WTC11 (cell line): ENCODE measurements at regions of chr10 and their contacts with region 1.

Region 1: DNA sequence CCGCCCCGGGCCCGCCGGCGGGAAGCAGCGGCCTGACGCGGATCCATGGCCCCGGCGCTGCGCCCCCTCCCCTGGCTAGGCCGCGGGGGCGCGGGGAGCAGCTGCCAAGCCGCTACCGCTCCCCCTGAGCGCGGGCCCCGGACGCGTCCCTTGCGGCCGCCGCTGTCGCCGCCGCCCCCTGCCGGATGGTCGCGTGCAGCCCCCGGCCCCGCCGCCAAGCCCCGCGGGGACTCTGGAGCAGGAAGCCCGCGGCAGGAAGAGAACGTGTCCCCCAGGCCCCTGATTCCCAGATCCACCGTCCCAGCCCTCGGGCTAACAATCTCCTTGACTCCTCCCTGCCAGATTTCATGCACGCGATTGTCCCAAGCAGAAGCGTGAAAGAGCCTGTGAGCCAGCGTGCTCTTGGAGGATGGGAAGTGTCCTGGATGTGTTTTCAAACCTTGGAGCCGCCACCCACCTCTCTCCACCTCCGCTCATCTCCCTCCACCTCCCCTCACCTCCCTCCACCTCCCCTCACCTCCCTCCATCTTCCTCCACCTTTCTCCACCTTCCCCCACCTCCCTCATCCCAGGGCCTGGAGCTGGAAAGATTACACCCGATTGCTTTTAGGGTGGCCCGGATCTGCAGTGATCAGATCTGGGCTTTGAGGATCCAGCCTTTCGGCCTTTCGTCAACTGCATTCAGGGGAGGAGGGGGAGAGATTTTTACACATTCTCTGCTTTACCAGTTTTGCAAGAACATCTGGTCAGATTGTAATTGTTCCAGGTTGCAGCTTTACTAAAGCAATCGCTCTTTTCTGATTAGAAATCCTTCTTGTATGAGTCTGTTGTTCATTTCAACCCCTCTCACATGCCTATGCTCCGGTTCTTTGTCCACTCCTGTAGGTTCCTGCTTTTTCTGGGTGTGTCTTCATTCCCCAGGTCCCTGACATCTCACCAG is 570 bp upstream of the PRTFDC1 start:
- DNase-seq: no peak
- ATAC-seq: peak; percentile 43
- H3K4me3 Mint-ChIP-seq: peak overlapping the region; percentile 75
- H3K27ac Mint-ChIP-seq: peak overlapping the region; percentile 84
- H3K4me1 Mint-ChIP-seq: peaks cover 35% of the 10 kb centered on the region
- H3K27me3 Mint-ChIP-seq: no peaks in the 10 kb centered on the region
- CTCF ChIP-seq: no peak

Region 2: GRCh38 chr10:24415455-24416125 is 537.4 kb before region 1 on chr10:
- CTCF ChIA-PET with region 1: no interaction called
- POLR2A ChIA-PET with region 1: no interaction called
- DNase-seq: peak; percentile 12
- ATAC-seq: peak; percentile 48; the same call in 1 of the 2 replicates
- H3K4me3 Mint-ChIP-seq: no peak overlapping the region
- H3K27ac Mint-ChIP-seq: no peak overlapping the region
- H3K4me1 Mint-ChIP-seq: peaks cover 14% of the 10 kb centered on the region
- H3K27me3 Mint-ChIP-seq: no peaks in the 10 kb centered on the region
- CTCF ChIP-seq: no peak

Region 3: GRCh38 chr10:24724381-24725228 is 228.4 kb before region 1 on chr10:
- CTCF ChIA-PET with region 1: interaction called, 5 read pairs
- POLR2A ChIA-PET with region 1: interaction called, 12 read pairs
- DNase-seq: peak; percentile 97
- ATAC-seq: peak; percentile 80
- H3K4me3 Mint-ChIP-seq: peak overlapping the region; percentile 88
- H3K27ac Mint-ChIP-seq: peak overlapping the region; percentile 60
- H3K4me1 Mint-ChIP-seq: peaks cover 35% of the 10 kb centered on the region
- H3K27me3 Mint-ChIP-seq: peaks cover 38% of the 10 kb centered on the region
- CTCF ChIP-seq: no peak

Region 4: DNA sequence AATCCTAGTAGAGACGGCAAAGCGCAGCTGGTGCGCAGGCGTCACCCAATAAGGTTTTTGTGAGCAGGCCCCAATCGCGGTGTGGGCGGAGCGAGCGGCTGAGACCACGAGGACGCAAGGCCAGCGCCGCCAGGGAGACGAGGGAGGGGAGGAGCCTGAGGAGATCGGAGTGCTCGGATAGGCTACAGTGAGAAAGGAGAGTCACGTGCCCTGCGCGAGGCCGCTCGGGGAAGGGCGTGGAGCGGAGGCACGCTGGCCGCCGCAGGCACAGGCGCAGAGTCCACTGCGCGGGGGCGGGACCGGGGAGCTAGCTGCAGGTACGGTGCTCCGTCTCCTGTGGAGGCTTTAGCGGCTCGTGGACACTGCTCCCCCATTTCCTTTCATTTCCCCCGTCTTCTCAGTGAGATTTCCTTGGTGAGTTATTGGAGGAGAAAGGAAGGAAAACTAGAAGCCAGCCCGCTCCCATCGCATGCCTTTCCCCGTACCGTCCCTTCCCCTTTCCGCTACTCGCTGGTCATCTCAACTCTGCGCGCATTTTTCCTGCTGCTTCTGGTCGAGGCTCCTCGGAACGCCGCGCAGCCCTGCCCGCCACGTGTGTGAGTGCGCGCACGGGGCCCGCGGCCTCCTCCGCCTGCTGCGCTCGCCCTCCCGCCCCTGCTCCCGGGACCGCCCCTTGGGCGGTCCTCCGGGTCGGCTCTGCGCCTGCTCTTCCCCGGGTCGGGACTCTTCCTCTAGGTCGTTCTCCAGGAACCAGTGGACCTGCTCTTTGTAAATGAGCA is 63.6 kb after region 1 on chr10 and contains the start of gene THNSL1:
- CTCF ChIA-PET with region 1: no interaction called
- POLR2A ChIA-PET with region 1: interaction called, 10 read pairs
- DNase-seq: peak; percentile 97
- ATAC-seq: peak; percentile 98
- H3K4me3 Mint-ChIP-seq: peak within 1 kb of the TSS; percentile 75
- H3K27ac Mint-ChIP-seq: peak within 1 kb of the TSS; percentile 94
- H3K4me1 Mint-ChIP-seq: peaks cover 11% of the 10 kb centered on the region
- H3K27me3 Mint-ChIP-seq: no peaks in the 10 kb centered on the region; the same call in 1 of the 2 replicates
- CTCF ChIP-seq: no peak
- total RNA-seq, gene THNSL1: 5.1 to 5.5 TPM (median 5.4 TPM) in 3 replicates